Naive thymus-derived CD4-positive, alpha-beta T cell (primary cell): ENCODE measurements at regions of chr11 and their contacts with region 1.

Region 1: DNA sequence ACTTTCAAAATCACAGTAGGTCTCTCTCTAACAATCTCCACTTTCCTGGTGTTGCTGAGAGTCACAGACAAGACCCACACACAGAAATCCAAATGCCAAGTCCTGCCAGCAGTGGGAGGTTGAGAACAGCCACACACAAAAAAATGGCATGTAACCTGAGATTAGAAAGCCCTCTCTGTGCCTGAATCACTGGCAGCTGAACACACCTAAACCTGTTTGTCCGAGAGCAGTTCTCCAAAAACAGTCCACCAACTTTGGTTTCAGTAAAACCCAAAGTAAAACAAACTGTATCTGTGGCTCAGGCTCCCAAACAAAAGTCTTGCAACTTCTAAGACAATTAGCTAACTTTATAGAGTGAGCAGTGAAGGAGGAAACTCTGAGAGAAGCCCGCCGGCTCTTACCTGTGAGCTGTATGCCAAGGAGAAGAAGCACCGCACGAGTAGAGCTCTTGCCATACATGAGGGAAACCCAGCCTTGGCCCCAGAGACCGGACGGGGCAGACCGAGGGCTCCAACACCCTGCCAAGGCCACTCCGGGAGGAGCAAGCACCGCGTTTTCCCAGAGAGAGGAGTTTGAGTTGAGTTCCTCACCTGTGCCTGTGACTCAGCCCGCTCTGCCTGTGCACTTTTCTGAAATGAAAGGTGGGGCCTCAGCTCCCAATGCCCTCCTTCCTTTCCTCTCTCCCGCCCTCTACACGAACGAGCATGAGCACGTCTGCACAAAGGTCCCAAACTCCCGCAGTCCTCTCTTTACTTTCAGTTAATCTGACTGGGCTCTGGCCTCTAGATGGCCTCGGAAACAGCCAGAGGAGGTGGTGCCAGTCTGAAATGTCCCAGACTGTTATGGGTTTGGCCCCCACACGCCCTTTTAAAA is at the start of gene MPZL2:
- DNase-seq: peak in 8 of 9 donors; percentile 11 to 47 (median 28)
- ATAC-seq: peak; percentile 72
- H3K4me3 ChIP-seq: peak within 1 kb of the TSS; percentile 29
- H3K4me3 Mint-ChIP-seq: peak within 1 kb of the TSS; percentile 78 to 91 (median 88)
- H3K27ac ChIP-seq: peak within 1 kb of the TSS; percentile 55
- H3K27ac Mint-ChIP-seq: peak within 1 kb of the TSS; percentile 30 to 94 (median 75)
- H3K4me1 ChIP-seq: peaks cover 0 to 14% of the 10 kb centered on the region in 2 donors
- H3K4me1 Mint-ChIP-seq: peaks cover 19 to 44% (median 37%) of the 10 kb centered on the region in 7 donors
- H3K27me3 ChIP-seq: no peaks in the 10 kb centered on the region
- H3K27me3 Mint-ChIP-seq: peaks cover 0 to 19% (median 0%) of the 10 kb centered on the region in 5 donors
- total RNA-seq, gene MPZL2: 0.69 to 5.9 (median 1.6) TPM

Region 2: GRCh38 chr11:118283756-118284350 is 19.9 kb after region 1 on chr11:
- CTCF ChIA-PET with region 1: no interaction called
- POLR2A ChIA-PET with region 1: interaction called, 8 read pairs
- intact Hi-C with region 1: loop called in 1 of 2 experiments (anchors 2 kb)
- DNase-seq: peak in 1 of 9 donors; percentile 20
- ATAC-seq: no peak
- H3K4me3 ChIP-seq: no peak overlapping the region
- H3K4me3 Mint-ChIP-seq: peak overlapping the region in 8 of 10 donors; percentile 11 to 60 (median 42)
- H3K27ac ChIP-seq: peak overlapping the region; percentile 25
- H3K27ac Mint-ChIP-seq: peak overlapping the region; percentile 14 to 90 (median 83)
- H3K4me1 ChIP-seq: peaks cover 0 to 9% of the 10 kb centered on the region in 2 donors
- H3K4me1 Mint-ChIP-seq: peaks cover 23 to 43% (median 27%) of the 10 kb centered on the region in 7 donors
- H3K27me3 ChIP-seq: no peaks in the 10 kb centered on the region
- H3K27me3 Mint-ChIP-seq: no peaks in the 10 kb centered on the region